Ascending aorta (tissue), 2 donors: ENCODE measurements at regions of chr3 and their contacts with region 1.

Region 1: DNA sequence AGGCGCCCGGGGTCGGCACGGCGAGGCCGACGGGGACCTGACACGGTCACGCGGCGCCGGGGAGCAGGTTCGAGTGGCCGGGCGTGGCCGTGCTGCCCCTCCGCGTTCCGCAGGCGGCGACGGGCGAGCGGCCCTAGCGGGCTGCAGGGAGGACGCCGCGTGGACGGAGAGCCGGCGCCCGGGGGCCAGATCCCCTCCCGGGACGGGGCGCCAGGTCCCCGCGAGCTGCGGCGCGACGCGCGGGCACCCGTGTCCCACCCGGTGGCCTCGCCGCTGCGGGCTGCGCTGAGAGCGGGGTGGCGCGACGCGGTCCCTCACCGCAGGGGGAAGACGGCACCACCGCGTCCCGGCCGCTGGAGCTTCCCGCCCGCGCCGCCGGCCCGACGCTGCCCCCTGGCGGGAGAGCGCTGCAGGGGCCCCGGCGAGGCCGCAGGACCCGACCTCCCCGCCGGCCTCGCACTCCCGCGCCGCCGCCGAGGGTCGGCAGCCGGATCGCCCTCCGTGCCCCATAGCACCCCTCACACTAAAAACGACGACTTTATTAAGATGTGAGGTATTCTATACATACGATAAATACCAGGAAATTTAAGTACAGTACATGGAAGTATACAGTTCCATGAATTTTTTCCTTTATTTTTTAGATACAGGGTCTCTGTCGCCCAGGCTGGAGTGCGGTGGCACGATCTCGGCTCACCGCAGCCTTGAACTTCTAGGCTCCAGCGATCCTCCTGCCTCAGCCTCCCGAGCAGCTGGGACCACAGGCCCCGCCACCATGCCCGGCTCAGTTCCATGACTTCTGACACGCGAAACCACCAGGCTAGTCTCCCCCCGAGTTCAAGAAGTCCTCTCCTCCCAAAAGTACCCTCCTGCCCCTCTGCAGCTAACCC is 1.3 kb upstream of the PIGZ start:
- DNase-seq: no peak
- H3K4me3 ChIP-seq: peak overlapping the region; percentile 89 to 92
- H3K27ac ChIP-seq: peak overlapping the region in 1 of 2 donors; percentile 70
- H3K4me1 ChIP-seq: peaks cover 0 to 3% of the 10 kb centered on the region in 2 donors
- H3K27me3 ChIP-seq: no peaks in the 10 kb centered on the region
- CTCF ChIP-seq: peak in 2 of 3 experiments; percentile 55 to 94

Region 2: GRCh38 chr3:196837819-196838420 is 132.0 kb before region 1 on chr3:
- intact Hi-C with region 1: loop called (anchors 5 kb)
- DNase-seq: peak in 1 of 2 donors; percentile 78
- H3K4me3 ChIP-seq: no peak overlapping the region
- H3K27ac ChIP-seq: no peak overlapping the region
- H3K4me1 ChIP-seq: no peaks in the 10 kb centered on the region
- H3K27me3 ChIP-seq: no peaks in the 10 kb centered on the region
- CTCF ChIP-seq: peak; percentile 45 to 65 (median 56)

Region 3: DNA sequence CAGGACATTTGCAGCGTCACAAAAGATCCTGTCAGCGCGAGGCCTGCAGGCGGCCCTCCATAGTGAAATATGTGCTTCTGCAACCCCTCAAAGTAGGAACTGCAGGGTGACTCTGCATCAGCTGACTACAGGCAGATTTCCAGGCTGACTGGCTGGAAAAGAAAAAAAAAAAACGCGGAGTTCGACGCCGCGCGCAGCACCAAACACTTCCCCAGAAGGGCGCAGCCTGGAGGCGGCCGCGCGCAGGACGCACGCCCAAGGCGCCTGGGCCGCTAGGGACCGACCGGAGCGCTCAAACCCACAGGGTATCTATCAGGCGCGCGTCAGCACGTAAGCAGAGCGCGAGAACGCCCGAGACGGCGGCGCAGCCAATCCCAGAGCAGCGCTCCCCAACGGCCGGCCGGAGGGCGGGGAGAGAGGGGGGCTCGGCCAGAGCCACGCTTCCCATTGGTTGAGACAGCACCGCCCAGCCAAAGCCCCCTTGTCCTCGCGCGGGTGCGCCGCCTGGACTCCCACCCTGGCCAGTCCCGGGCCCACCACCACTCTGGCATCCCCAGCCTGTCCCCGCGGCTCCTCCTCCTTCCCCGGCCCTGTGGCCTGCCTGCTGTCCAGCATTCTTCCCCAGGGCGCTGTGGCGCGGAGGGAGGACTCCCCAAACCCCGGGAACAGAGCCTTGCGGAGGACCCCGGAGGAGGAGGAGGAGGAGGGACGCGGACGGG is 584.8 kb after region 1 on chr3:
- intact Hi-C with region 1: loop called (anchors 10 kb)
- DNase-seq: peak; percentile 75 to 97
- H3K4me3 ChIP-seq: peak overlapping the region; percentile 69 to 80
- H3K27ac ChIP-seq: peak overlapping the region; percentile 82 to 93
- H3K4me1 ChIP-seq: peaks cover 0 to 12% of the 10 kb centered on the region in 2 donors
- H3K27me3 ChIP-seq: no peaks in the 10 kb centered on the region
- CTCF ChIP-seq: peak; percentile 41 to 60 (median 47)